Activated naive CD8-positive, alpha-beta T cell treated with anti-CD3 and anti-CD28 coated beads, Interleukin-2, amount 10 ng/mL, durations not matched to agents 7 days and 5 days (primary cell): ENCODE measurements at regions of chr5 and their contacts with region 1.

Region 1: GRCh38 chr5:96934708-96935558 is 947 bp upstream of the LNPEP start:
- DNase-seq: peak; percentile 99
- ATAC-seq: peak; percentile 74
- H3K4me3 Mint-ChIP-seq: peak overlapping the region; percentile 95
- H3K27ac Mint-ChIP-seq: peak overlapping the region; percentile 99
- H3K4me1 Mint-ChIP-seq: peaks cover 36% of the 10 kb centered on the region
- H3K27me3 Mint-ChIP-seq: no peaks in the 10 kb centered on the region

Region 2: DNA sequence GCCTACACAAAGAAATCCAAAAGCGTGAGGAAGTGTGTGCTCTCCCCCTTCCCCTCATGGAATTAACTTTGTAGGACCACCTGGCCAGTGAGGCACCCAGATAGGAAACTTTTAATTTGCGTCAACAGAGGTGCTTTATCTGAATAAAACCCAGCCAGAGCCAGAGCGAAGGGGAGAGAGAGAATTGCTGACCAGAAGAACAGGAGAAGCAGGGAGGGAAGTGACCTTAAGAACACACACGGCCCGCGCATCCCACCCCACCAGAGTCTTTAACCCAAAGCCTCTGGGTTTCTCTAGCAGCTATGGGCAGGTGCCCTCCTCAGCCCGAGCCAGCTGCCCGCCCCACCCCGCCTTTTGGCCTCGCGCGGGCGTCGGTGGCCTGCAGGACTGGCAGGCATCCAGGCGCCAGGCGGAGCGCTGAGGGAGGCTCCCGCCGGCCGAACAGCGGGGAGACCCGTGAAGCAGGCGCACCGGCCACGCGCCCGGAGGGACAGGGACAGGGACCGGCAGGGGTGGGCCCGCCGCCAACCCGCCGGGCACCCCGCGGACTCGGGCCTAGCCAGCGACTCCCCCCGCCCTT is 127.8 kb before region 1 on chr5:
- POLR2A ChIA-PET with region 1: interaction called, 16 read pairs
- DNase-seq: no peak
- ATAC-seq: peak; percentile 15
- H3K4me3 Mint-ChIP-seq: peak overlapping the region; percentile 97
- H3K27ac Mint-ChIP-seq: peak overlapping the region; percentile 100
- H3K4me1 Mint-ChIP-seq: peaks cover 58% of the 10 kb centered on the region
- H3K27me3 Mint-ChIP-seq: no peaks in the 10 kb centered on the region

Region 3: DNA sequence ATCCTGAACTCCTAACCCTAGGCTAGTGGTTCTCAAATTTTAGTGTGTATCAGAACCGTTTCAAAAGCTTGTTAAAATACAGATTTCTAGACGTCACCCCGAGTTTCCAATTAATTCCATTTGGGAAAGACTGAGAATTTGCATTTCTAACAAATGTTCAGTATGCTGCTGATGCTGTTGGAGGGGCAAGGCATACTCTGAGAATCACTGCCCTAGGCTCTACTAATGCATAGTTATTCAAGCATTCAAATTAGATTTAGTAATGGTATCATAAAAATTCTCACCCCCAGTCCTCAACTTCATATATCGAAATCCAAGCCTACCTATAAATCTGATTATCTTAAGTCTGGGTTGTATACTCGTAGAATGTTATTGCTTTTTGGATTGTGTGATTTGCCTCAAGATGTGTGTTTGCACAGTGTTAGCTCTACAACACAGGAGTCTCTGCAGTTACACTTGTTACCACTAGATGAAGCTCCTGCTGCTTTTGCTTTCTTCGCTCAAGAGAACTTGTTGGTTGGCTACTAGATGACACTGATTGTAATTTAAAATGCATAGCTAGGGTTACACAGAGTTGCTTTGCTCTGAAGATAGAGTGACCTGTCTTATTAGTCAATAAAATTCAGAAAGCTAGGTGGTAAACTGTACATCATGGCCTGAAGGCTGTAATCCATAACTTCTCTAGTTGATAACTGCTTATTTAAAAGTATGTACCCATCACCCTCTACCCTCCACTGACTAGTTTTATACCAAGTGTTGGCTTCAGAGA is 66.1 kb before region 1 on chr5:
- POLR2A ChIA-PET with region 1: interaction called, 19 read pairs
- DNase-seq: no peak
- ATAC-seq: peak; percentile 92
- H3K4me3 Mint-ChIP-seq: no peak overlapping the region
- H3K27ac Mint-ChIP-seq: no peak overlapping the region
- H3K4me1 Mint-ChIP-seq: peaks cover 45% of the 10 kb centered on the region
- H3K27me3 Mint-ChIP-seq: no peaks in the 10 kb centered on the region

Region 4: DNA sequence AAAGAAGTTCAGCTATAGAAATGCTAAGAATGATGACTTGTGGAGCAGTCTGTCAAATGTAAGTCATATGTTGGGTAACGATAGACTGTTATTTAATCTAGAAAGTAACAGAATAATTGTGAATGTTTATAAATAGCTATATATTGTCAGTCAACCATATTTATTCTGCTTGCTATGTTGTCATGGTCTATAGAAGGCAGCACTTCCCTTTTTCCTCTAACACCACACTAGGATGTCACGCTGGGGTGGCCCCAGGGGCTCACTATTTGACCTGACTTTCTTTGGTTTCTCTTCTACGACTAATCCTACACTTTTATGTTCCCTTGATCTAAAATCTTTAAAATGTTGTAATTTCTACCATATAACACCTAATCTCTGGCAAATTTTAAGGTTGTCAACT is 38.1 kb before region 1 on chr5:
- POLR2A ChIA-PET with region 1: interaction called, 10 read pairs
- DNase-seq: no peak
- ATAC-seq: no peak
- H3K4me3 Mint-ChIP-seq: peak overlapping the region; percentile 81
- H3K27ac Mint-ChIP-seq: peak overlapping the region; percentile 92
- H3K4me1 Mint-ChIP-seq: peaks cover 36% of the 10 kb centered on the region
- H3K27me3 Mint-ChIP-seq: no peaks in the 10 kb centered on the region

Region 5: GRCh38 chr5:96924016-96924443 is 10.9 kb before region 1 on chr5:
- POLR2A ChIA-PET with region 1: interaction called, 13 read pairs
- DNase-seq: no peak
- ATAC-seq: peak; percentile 78
- H3K4me3 Mint-ChIP-seq: peak overlapping the region; percentile 9
- H3K27ac Mint-ChIP-seq: peak overlapping the region; percentile 72
- H3K4me1 Mint-ChIP-seq: peaks cover 39% of the 10 kb centered on the region
- H3K27me3 Mint-ChIP-seq: no peaks in the 10 kb centered on the region

Region 6: DNA sequence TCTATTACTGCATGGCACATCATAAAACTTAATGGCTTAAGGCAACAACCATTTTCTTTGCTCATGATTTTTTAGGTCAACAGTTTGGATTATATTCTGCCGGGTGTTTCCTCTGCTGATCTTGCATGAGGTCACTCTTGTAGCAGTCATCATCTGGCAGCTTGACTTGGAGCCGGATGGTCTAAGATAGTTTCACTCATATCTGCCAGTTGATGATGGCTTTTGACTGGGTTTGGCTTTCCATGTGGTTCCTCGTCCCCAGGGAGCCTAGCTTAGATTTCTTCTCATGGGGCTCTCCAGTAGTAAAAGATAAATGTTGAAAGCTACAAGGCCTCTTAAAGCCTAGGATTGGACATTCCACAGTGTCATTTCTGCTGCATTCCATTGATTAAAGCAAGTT is 28.3 kb after region 1 on chr5:
- POLR2A ChIA-PET with region 1: interaction called, 52 read pairs
- DNase-seq: no peak
- ATAC-seq: peak; percentile 77
- H3K4me3 Mint-ChIP-seq: peak overlapping the region; percentile 83
- H3K27ac Mint-ChIP-seq: peak overlapping the region; percentile 93
- H3K4me1 Mint-ChIP-seq: peaks cover 59% of the 10 kb centered on the region
- H3K27me3 Mint-ChIP-seq: no peaks in the 10 kb centered on the region

Region 7: GRCh38 chr5:97026721-97027120 is 91.8 kb after region 1 on chr5:
- POLR2A ChIA-PET with region 1: no interaction called
- DNase-seq: no peak
- ATAC-seq: no peak
- H3K4me3 Mint-ChIP-seq: no peak overlapping the region
- H3K27ac Mint-ChIP-seq: no peak overlapping the region
- H3K4me1 Mint-ChIP-seq: peaks cover 14% of the 10 kb centered on the region
- H3K27me3 Mint-ChIP-seq: no peaks in the 10 kb centered on the region

Region 8: GRCh38 chr5:97276474-97277120 is 341.7 kb after region 1 on chr5:
- POLR2A ChIA-PET with region 1: no interaction called
- DNase-seq: no peak
- ATAC-seq: no peak
- H3K4me3 Mint-ChIP-seq: no peak overlapping the region
- H3K27ac Mint-ChIP-seq: no peak overlapping the region
- H3K4me1 Mint-ChIP-seq: no peaks in the 10 kb centered on the region
- H3K27me3 Mint-ChIP-seq: no peaks in the 10 kb centered on the region